ENCODE measurements at regions of chr9 and their contacts with region 1.

Region 1: DNA sequence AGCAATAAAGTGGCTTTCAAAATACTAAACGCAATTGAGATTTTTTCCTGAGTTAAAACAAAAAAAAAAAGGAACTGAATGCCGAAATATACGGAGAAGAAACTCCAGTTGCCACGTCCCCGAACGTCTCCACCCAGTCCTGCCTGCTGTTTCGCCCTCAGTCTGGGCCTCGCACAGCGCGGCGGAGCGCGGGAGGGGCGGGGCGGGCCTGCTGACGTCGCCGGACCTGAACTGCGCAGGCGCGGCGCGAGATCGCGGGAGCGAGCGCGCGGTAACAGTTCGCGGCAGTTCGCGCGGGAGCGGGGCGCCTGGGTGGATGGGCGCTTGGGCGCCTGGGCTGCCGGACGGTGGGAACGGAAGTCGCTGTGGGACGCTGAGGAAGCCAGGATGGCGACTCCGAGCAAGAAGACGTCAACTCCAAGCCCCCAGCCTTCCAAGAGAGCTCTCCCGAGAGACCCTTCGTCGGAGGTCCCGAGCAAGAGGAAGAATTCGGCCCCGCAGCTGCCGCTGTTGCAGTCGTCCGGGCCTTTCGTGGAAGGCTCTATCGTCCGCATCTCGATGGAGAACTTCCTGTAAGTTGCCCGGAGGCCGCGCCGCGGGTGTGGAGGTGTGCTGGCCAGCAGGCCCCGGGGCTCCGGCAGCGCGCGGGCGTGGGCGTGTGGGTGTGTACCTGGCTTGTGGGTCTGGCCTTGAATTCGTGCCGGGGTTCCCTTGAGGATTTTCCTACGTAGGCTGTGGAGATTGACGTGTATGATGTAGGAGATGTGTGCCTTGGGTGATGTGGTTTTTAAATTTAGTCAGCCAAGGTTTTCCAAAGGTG is at the start of gene SMC5:
- DNase-seq: peak; percentile 90 to 96 (median 93)
- H3K4me3 ChIP-seq: peak within 1 kb of the TSS; percentile 61
- H3K27ac ChIP-seq: peak within 1 kb of the TSS; percentile 82 to 95
- H3K4me1 ChIP-seq: peaks cover 25% of the 10 kb centered on the region
- H3K27me3 ChIP-seq: no peaks in the 10 kb centered on the region
- CTCF ChIP-seq: no peak
- EP300 ChIP-seq: no peak
- POLR2A ChIP-seq: peak; percentile 98
- total RNA-seq, gene SMC5: 32.4 to 55.8 (median 52.6) TPM

Region 2: GRCh38 chr9:70120834-70121510 is 137.9 kb before region 1 on chr9:
- intact Hi-C with region 1: loop called in 1 of 4 experiments (anchors 10 kb)
- DNase-seq: peak; percentile 48 to 79 (median 65)
- H3K4me3 ChIP-seq: no peak overlapping the region
- H3K27ac ChIP-seq: peak overlapping the region in 1 of 2 donors; percentile 16
- H3K4me1 ChIP-seq: peaks cover 10% of the 10 kb centered on the region
- H3K27me3 ChIP-seq: no peaks in the 10 kb centered on the region
- CTCF ChIP-seq: peak in 1 of 3 donors; percentile 37
- EP300 ChIP-seq: no peak
- POLR2A ChIP-seq: no peak

Region 3: GRCh38 chr9:70205367-70206032 is 53.4 kb before region 1 on chr9:
- intact Hi-C with region 1: no loop called
- DNase-seq: no peak
- H3K4me3 ChIP-seq: no peak overlapping the region
- H3K27ac ChIP-seq: no peak overlapping the region
- H3K4me1 ChIP-seq: no peaks in the 10 kb centered on the region
- H3K27me3 ChIP-seq: no peaks in the 10 kb centered on the region
- CTCF ChIP-seq: no peak
- EP300 ChIP-seq: no peak
- POLR2A ChIP-seq: no peak

Region 4: GRCh38 chr9:70218767-70219166 is 40.1 kb before region 1 on chr9:
- intact Hi-C with region 1: no loop called
- DNase-seq: no peak
- H3K4me3 ChIP-seq: no peak overlapping the region
- H3K27ac ChIP-seq: no peak overlapping the region
- H3K4me1 ChIP-seq: no peaks in the 10 kb centered on the region
- H3K27me3 ChIP-seq: no peaks in the 10 kb centered on the region
- CTCF ChIP-seq: no peak
- EP300 ChIP-seq: no peak
- POLR2A ChIP-seq: no peak

Region 5: DNA sequence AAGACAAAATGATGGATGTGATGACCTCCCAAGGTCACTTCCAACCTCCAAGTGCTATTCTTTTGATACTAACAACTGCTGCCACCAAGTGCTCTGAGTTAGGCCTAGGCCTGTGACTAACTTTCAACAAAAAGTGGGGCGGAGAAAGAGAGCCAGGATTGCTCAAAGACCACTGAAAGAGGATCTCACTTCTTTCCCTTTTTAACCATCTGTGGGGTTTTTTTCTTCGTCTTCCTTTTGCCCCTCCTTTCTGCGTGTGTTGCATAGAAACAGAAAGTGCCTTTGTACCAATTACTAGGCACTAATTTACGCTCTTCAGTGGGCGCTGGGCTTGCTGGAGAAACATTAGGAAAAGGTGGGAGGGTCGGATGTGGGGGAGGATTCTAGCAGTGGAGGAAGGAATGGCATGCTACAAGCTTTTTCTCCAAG is 147.5 kb after region 1 on chr9:
- intact Hi-C with region 1: loop called in 1 of 4 experiments (anchors 10 kb)
- DNase-seq: peak in 2 of 5 donors; percentile 45 to 49
- H3K4me3 ChIP-seq: peak overlapping the region; percentile 3
- H3K27ac ChIP-seq: peak overlapping the region; percentile 39 to 69
- H3K4me1 ChIP-seq: peaks cover 45% of the 10 kb centered on the region
- H3K27me3 ChIP-seq: no peaks in the 10 kb centered on the region
- CTCF ChIP-seq: no peak
- EP300 ChIP-seq: no peak
- POLR2A ChIP-seq: no peak

Region 6: GRCh38 chr9:70609542-70610286 is 350.8 kb after region 1 on chr9:
- intact Hi-C with region 1: loop called in 1 of 4 experiments (anchors 5 kb)
- DNase-seq: peak in 3 of 5 donors; percentile 38 to 62 (median 53)
- H3K4me3 ChIP-seq: no peak overlapping the region
- H3K27ac ChIP-seq: no peak overlapping the region
- H3K4me1 ChIP-seq: no peaks in the 10 kb centered on the region
- H3K27me3 ChIP-seq: no peaks in the 10 kb centered on the region
- CTCF ChIP-seq: no peak
- EP300 ChIP-seq: no peak
- POLR2A ChIP-seq: no peak